ENCODE measurements at regions of chr3 and their contacts with region 1.

Region 1: GRCh38 chr3:140358686-140359085 is 319.2 kb upstream of the TRIM42 start:
- DNase-seq: no peak
- H3K4me3 ChIP-seq: no peak overlapping the region
- H3K27ac ChIP-seq: no peak overlapping the region
- H3K4me1 ChIP-seq: no peaks in the 10 kb centered on the region
- H3K27me3 ChIP-seq: no peaks in the 10 kb centered on the region
- CTCF ChIP-seq: no peak

Region 2: GRCh38 chr3:139975594-139976365 is 382.9 kb before region 1 on chr3:
- intact Hi-C with region 1: no loop called
- DNase-seq: no peak
- H3K4me3 ChIP-seq: no peak overlapping the region
- H3K27ac ChIP-seq: no peak overlapping the region
- H3K4me1 ChIP-seq: no peaks in the 10 kb centered on the region
- H3K27me3 ChIP-seq: no peaks in the 10 kb centered on the region
- CTCF ChIP-seq: no peak

Region 3: GRCh38 chr3:140686948-140687347 is 328.3 kb after region 1 on chr3:
- intact Hi-C with region 1: loop called (anchors 5 kb)
- DNase-seq: no peak
- H3K4me3 ChIP-seq: no peak overlapping the region
- H3K27ac ChIP-seq: no peak overlapping the region
- H3K4me1 ChIP-seq: no peaks in the 10 kb centered on the region
- H3K27me3 ChIP-seq: no peaks in the 10 kb centered on the region
- CTCF ChIP-seq: no peak